Ovary (tissue), 10 donors: ENCODE measurements at regions of chr18 and their contacts with region 1.

Region 1: DNA sequence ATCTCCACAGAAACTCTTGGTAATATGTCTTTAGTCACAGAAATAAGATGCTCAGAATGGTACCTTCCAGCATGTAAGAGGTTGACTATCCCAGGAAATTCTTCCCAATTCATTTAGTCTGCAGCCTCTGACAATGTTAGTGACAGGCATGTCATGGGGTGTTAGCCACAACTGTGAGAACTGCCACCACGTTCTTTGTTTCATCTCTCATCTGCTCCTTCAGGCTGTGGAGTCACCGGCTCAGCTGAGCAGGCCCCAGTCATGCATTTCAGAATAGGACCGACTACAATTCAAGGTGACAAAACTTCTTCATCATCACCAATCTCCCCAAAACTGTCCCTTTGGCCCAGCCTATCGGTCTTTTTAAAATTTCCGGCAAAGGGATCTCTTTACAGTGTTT is 167.5 kb downstream of the AKAIN1 start:
- DNase-seq: no peak
- H3K4me3 ChIP-seq: no peak overlapping the region
- H3K27ac ChIP-seq: no peak overlapping the region
- H3K4me1 ChIP-seq: no peaks in the 10 kb centered on the region
- H3K27me3 ChIP-seq: no peaks in the 10 kb centered on the region
- CTCF ChIP-seq: no peak
- EP300 ChIP-seq: no peak
- POLR2A ChIP-seq: no peak

Region 2: DNA sequence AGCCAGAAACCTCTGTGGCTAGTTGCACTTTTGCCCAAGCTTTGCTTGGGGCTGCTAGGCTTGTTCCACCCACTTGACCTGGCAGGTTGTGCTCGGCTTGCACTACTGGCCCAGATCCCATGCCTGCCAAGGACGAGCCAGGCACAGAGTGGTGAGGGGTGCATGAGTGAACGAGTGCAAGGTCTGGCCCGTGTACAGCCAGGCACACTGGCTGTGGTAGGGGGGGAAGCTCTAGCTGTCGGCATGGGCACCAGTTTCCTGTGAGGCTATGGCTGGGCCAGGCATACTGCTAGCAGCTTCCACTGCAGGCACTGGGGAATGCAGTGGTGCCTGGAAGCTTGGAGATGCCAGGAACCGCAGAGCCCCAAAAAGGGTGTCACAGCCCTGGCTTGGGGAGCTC is 42.9 kb before region 1 on chr18:
- intact Hi-C with region 1: loop called in 1 of 4 experiments (anchors 2 kb)
- DNase-seq: no peak
- H3K4me3 ChIP-seq: no peak overlapping the region
- H3K27ac ChIP-seq: no peak overlapping the region
- H3K4me1 ChIP-seq: no peaks in the 10 kb centered on the region
- H3K27me3 ChIP-seq: no peaks in the 10 kb centered on the region
- CTCF ChIP-seq: no peak
- EP300 ChIP-seq: no peak
- POLR2A ChIP-seq: no peak